ENCODE measurements at regions of chr1 and their contacts with region 1.

Region 1: DNA sequence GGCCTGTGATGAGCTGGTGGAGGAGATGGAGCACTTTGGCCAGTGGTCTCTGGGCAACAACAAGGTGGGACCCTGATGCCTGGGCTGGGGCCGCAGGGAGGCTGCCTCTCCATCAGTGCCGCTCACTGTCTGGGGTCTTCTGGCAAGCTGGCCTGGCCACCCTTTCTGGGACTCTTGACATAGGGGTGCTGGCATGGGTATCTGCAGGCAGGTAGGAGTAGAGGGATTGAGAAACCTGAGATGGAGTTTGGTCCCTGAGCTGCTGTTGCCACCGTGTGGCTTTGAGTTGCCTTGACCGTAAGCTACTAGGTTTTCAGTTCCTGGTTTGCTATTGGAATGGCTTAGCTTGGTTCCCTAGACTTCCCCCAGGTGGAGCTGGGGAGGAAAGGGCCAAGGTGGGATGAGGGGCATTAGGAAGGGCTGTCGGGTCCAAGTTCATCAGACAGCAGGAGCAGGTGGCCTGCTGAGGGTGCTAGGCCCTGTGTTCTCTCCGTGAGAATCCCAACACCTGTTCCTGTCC is 13.2 kb upstream of the MFN2 start:
- DNase-seq: no peak
- ATAC-seq: peak; percentile 27 to 80 (median 69)
- H3K4me3 ChIP-seq: no peak overlapping the region
- H3K27ac ChIP-seq: no peak overlapping the region
- H3K4me1 ChIP-seq: no peaks in the 10 kb centered on the region
- H3K27me3 ChIP-seq: no peaks in the 10 kb centered on the region
- CTCF ChIP-seq: peak in 11 of 12 donors; percentile 28 to 64 (median 47)
- POLR2A ChIP-seq: no peak

Region 2: DNA sequence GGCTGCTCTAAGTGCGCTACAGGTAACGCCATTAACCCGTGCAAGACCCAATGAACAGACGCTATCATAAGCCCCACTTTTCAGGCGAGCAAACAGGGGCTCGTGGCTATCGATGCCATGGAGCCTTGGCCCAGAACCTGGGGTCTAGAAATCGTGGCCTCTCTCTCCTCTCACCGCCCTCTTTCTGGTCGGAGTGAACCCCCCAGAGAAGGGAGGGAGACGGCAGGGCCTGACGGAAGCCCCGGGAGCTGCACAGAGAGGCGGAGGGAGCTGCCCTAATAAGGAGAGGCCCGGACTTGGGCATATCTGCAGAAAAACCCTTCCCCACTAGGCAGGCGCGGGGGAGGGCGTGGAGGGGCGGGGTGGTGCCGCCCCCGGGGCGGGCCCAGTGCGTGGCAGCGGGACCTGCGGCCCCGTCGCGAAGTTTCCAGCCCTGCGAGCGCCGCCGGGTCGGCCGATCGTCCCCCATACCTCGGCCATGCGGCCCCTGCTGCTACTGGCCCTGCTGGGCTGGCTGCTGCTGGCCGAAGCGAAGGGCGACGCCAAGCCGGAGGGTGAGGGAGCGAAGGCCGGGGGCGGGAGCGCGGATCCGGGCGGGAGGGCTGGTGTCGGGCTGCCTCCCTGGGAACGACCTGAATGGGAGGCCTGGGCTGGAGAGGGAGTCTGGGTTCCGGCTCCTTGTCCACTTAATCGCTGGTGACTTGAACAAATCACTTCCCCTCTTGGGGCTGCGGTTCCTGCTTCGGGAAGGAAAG is 32.6 kb before region 1 on chr1 and contains the start of gene PLOD1:
- intact Hi-C with region 1: loop called in 1 of 10 experiments (anchors 5 kb)
- DNase-seq: peak; percentile 91 to 96 (median 91)
- ATAC-seq: peak; percentile 71 to 95 (median 88)
- H3K4me3 ChIP-seq: peak within 1 kb of the TSS; percentile 27 to 92 (median 68)
- H3K27ac ChIP-seq: peak within 1 kb of the TSS; percentile 77 to 94 (median 88)
- H3K4me1 ChIP-seq: peaks cover 6 to 75% (median 58%) of the 10 kb centered on the region in 12 donors
- H3K27me3 ChIP-seq: no peaks in the 10 kb centered on the region
- CTCF ChIP-seq: no peak
- POLR2A ChIP-seq: peak; percentile 20 to 88
- total RNA-seq, gene PLOD1: 37.5 to 104 (median 50.1) TPM

Region 3: DNA sequence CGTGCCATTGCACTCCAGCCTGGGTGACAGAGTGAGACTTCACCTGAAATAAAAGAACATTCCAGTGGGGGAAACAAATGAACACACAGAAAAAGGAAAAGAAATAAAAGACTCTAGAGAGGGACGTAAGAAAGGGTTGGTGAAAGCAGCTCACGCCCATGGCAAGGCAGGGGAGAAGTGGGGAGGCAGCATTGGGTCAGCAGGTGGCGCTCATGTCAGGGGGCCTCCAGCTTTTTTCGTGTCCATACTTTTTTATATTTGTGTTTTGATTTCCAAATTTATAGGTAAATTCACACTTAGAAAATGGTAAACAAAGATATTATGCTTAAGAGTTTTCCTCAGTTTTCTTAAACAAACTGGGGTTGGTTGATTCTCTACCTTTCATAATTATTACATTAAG is 308.3 kb after region 1 on chr1:
- intact Hi-C with region 1: no loop called
- DNase-seq: peak in 1 of 5 donors; percentile 42
- ATAC-seq: peak in 1 of 4 donors; percentile 32
- H3K4me3 ChIP-seq: no peak overlapping the region
- H3K27ac ChIP-seq: no peak overlapping the region
- H3K4me1 ChIP-seq: peaks cover 0 to 15% (median 0%) of the 10 kb centered on the region in 12 donors
- H3K27me3 ChIP-seq: no peaks in the 10 kb centered on the region
- CTCF ChIP-seq: peak; percentile 32 to 71 (median 58)
- POLR2A ChIP-seq: no peak

Measured in heart left ventricle (tissue), 16 donors.